ENCODE measurements at regions of chr10 and their contacts with region 1.

Region 1: GRCh38 chr10:7457478-7458316 is 46.9 kb upstream of the SFMBT2 start:
- DNase-seq: no peak
- H3K4me3 ChIP-seq: no peak overlapping the region
- H3K4me3 Mint-ChIP-seq: no peak overlapping the region
- H3K27ac ChIP-seq: no peak overlapping the region
- H3K27ac Mint-ChIP-seq: peak overlapping the region in 1 of 8 donors; percentile 27
- H3K4me1 ChIP-seq: no peaks in the 10 kb centered on the region
- H3K4me1 Mint-ChIP-seq: no peaks in the 10 kb centered on the region
- H3K27me3 ChIP-seq: no peaks in the 10 kb centered on the region
- H3K27me3 Mint-ChIP-seq: peaks cover 0 to 2% of the 10 kb centered on the region in 2 donors

Region 2: DNA sequence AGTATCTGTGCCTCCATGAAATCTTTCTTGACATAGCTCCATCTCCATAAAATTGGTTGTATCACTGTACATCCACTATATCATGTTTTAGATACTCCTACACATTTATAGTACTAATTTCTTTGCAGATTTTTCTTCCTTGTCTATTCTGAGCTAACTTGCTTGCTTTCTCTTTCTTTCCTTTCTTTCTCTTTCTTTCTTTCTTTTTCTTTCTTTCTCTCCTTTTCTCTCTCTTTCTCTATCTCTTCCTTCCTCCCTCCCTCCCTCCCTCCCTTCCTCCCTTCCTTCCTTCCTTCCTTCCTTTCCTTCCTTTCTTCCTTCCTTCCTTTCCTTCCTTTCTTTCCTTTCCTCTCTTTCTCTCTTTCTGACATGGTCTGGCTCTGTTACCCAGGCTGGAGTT is 1749.3 kb before region 1 on chr10:
- CTCF ChIA-PET with region 1: no interaction called
- POLR2A ChIA-PET with region 1: interaction called, 10 read pairs
- DNase-seq: no peak
- H3K4me3 ChIP-seq: no peak overlapping the region
- H3K4me3 Mint-ChIP-seq: no peak overlapping the region
- H3K27ac ChIP-seq: no peak overlapping the region
- H3K27ac Mint-ChIP-seq: peak overlapping the region in 4 of 8 donors; percentile 4 to 59 (median 30)
- H3K4me1 ChIP-seq: peaks cover 33% of the 10 kb centered on the region
- H3K4me1 Mint-ChIP-seq: peaks cover 68 to 89% (median 86%) of the 10 kb centered on the region in 3 donors
- H3K27me3 ChIP-seq: no peaks in the 10 kb centered on the region
- H3K27me3 Mint-ChIP-seq: no peaks in the 10 kb centered on the region

Region 3: GRCh38 chr10:7251696-7252465 is 205.8 kb before region 1 on chr10:
- CTCF ChIA-PET with region 1: no interaction called
- POLR2A ChIA-PET with region 1: no interaction called
- DNase-seq: no peak
- H3K4me3 ChIP-seq: no peak overlapping the region
- H3K4me3 Mint-ChIP-seq: no peak overlapping the region
- H3K27ac ChIP-seq: no peak overlapping the region
- H3K27ac Mint-ChIP-seq: peak overlapping the region in 4 of 8 donors; percentile 1 to 66 (median 24)
- H3K4me1 ChIP-seq: peaks cover 4% of the 10 kb centered on the region
- H3K4me1 Mint-ChIP-seq: peaks cover 26 to 40% (median 30%) of the 10 kb centered on the region in 3 donors
- H3K27me3 ChIP-seq: no peaks in the 10 kb centered on the region
- H3K27me3 Mint-ChIP-seq: peaks cover 0 to 5% of the 10 kb centered on the region in 2 donors

Measured in CD8-positive, alpha-beta memory T cell (primary cell).